ENCODE measurements at regions of chr2 and their contacts with region 1.

Region 1: GRCh38 chr2:231900486-231900942 is 25.7 kb downstream of the NPPC start:
- DNase-seq: no peak
- ATAC-seq: peak; percentile 100
- H3K4me3 ChIP-seq: no peak overlapping the region
- H3K27ac ChIP-seq: no peak overlapping the region
- H3K4me1 ChIP-seq: no peaks in the 10 kb centered on the region
- H3K27me3 ChIP-seq: no peaks in the 10 kb centered on the region; a peak in 2 of 4 replicates
- CTCF ChIP-seq: peak; percentile 73 to 99 (median 76)
- EP300 ChIP-seq: no peak
- POLR2A ChIP-seq: no peak
- RAD21 ChIP-seq: peak; percentile 30; the same call in 1 of the 2 replicates

Region 2: GRCh38 chr2:231917280-231918066 is 17.0 kb after region 1 on chr2:
- CTCF ChIA-PET with region 1: interaction called, 23 read pairs
- POLR2A ChIA-PET with region 1: no interaction called
- RAD21 ChIA-PET with region 1: no interaction called
- SMC1A ChIA-PET with region 1: no interaction called
- in situ Hi-C with region 1: no loop called
- intact Hi-C with region 1: no loop called
- DNase-seq: no peak
- ATAC-seq: no peak
- H3K4me3 ChIP-seq: no peak overlapping the region
- H3K27ac ChIP-seq: no peak overlapping the region
- H3K4me1 ChIP-seq: no peaks in the 10 kb centered on the region
- H3K27me3 ChIP-seq: no peaks in the 10 kb centered on the region; a peak in 1 of 4 replicates
- CTCF ChIP-seq: no peak
- EP300 ChIP-seq: no peak
- POLR2A ChIP-seq: no peak
- RAD21 ChIP-seq: no peak

Region 3: GRCh38 chr2:232327105-232328041 is 426.9 kb after region 1 on chr2:
- CTCF ChIA-PET with region 1: interaction called, 33 read pairs
- POLR2A ChIA-PET with region 1: no interaction called
- RAD21 ChIA-PET with region 1: interaction called, 4 read pairs
- SMC1A ChIA-PET with region 1: no interaction called
- in situ Hi-C with region 1: loop called (anchors 5 kb)
- intact Hi-C with region 1: no loop called
- DNase-seq: no peak
- ATAC-seq: peak; percentile 90
- H3K4me3 ChIP-seq: no peak overlapping the region
- H3K27ac ChIP-seq: no peak overlapping the region
- H3K4me1 ChIP-seq: peaks cover 10% of the 10 kb centered on the region
- H3K27me3 ChIP-seq: no peaks in the 10 kb centered on the region
- CTCF ChIP-seq: peak; percentile 61 to 84 (median 81)
- EP300 ChIP-seq: no peak
- POLR2A ChIP-seq: no peak
- RAD21 ChIP-seq: peak; percentile 81

Region 4: DNA sequence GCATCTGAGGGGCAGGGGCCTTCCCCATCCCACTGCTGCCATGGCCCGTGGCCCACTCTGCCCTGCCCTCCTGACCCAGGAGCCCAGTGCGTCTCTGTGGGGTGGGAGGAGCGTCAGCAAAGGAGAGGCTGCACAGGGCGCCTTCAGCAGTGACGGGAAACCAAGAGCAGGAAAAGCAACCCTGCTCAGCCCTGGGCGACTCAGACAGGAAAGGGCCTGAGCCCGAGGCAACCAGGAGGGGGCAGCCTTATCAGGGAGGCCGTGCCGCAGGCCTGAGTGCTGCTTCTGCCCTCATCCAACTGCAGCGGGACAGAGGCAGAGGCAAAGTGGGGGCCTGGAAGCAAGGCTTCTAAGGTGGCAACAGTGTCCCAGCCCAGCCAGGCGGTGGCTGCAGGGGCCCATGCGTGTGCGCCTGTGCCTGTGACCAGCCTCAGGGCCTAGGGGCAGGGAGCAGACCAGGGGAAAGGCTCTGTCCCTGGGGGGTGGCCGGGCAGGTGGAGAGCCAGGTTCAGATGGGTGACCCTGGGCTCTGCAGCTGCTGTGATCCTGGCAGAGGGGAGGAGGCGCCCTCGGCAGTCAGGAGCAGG is 532.2 kb after region 1 on chr2:
- CTCF ChIA-PET with region 1: interaction called, 4 read pairs
- POLR2A ChIA-PET with region 1: no interaction called
- RAD21 ChIA-PET with region 1: no interaction called
- SMC1A ChIA-PET with region 1: no interaction called
- in situ Hi-C with region 1: loop called (anchors 5 kb)
- intact Hi-C with region 1: no loop called
- DNase-seq: no peak
- ATAC-seq: peak; percentile 55
- H3K4me3 ChIP-seq: no peak overlapping the region
- H3K27ac ChIP-seq: no peak overlapping the region
- H3K4me1 ChIP-seq: no peaks in the 10 kb centered on the region
- H3K27me3 ChIP-seq: no peaks in the 10 kb centered on the region; a peak in 2 of 4 replicates
- CTCF ChIP-seq: no peak
- EP300 ChIP-seq: no peak
- POLR2A ChIP-seq: no peak
- RAD21 ChIP-seq: no peak

Measured in GM12878 (cell line).